H1 (cell line): ENCODE measurements at regions of chr13 and their contacts with region 1.

Region 1: DNA sequence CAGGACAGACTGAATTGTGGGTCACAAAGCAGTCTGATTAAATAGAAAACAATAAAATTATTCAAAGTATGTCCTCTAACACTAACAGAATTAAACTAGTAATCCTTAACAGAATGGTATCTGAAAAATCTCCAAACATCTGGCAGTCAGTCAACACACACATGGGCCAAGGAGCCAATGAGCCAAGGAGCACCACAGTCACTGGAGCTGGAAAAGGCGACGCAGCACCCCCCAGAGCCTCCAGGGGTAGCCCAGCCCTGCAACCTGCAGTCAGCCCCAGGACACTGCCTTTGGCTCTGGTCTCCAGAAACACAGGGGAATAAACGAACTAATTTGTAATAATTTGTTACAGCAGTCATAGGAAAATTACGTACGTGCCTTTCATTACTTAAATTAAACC is 12.3 kb downstream of the TUBGCP3 start:
- DNase-seq: no peak
- H3K4me3 ChIP-seq: no peak overlapping the region
- H3K27ac ChIP-seq: no peak overlapping the region
- H3K4me1 ChIP-seq: peaks cover 0 to 15% (median 3%) of the 10 kb centered on the region in 4 experiments; a peak in 5 of 7 replicates
- H3K27me3 ChIP-seq: no peaks in the 10 kb centered on the region
- CTCF ChIP-seq: peak; percentile 29 to 35 (median 34); a peak in 3 of 4 replicates
- EP300 ChIP-seq: no peak
- POLR2A ChIP-seq: no peak
- RAD21 ChIP-seq: peak in 1 of 2 experiments; percentile 20; a peak in 2 of 4 replicates

Region 2: GRCh38 chr13:112587212-112587763 is 11.6 kb after region 1 on chr13:
- CTCF ChIA-PET with region 1: interaction called, 3 read pairs
- POLR2A ChIA-PET with region 1: interaction called, 15 read pairs
- DNase-seq: peak in 1 of 2 experiments; percentile 83
- H3K4me3 ChIP-seq: peak overlapping the region; percentile 65 to 95 (median 68)
- H3K27ac ChIP-seq: peak overlapping the region; percentile 92
- H3K4me1 ChIP-seq: peaks cover 0 to 7% (median 5%) of the 10 kb centered on the region in 4 experiments; a peak in 6 of 7 replicates
- H3K27me3 ChIP-seq: peaks cover 0 to 4% (median 2%) of the 10 kb centered on the region in 4 experiments; a peak in 3 of 7 replicates
- CTCF ChIP-seq: no peak
- EP300 ChIP-seq: no peak
- POLR2A ChIP-seq: peak in 1 of 2 experiments; percentile 53; a peak in 2 of 3 replicates
- RAD21 ChIP-seq: no peak